ENCODE measurements at regions of chr13 and their contacts with region 1.

Region 1: GRCh38 chr13:43804461-43805070 is 17.8 kb upstream of the ENOX1 start:
- DNase-seq: peak; percentile 44
- H3K4me3 ChIP-seq: peak overlapping the region; percentile 43
- H3K27ac ChIP-seq: peak overlapping the region; percentile 83
- H3K27me3 ChIP-seq: no peaks in the 10 kb centered on the region
- CTCF ChIP-seq: peak; percentile 52

Region 2: GRCh38 chr13:43085545-43085944 is 719.0 kb before region 1 on chr13:
- CTCF ChIA-PET with region 1: interaction called, 62 read pairs
- POLR2A ChIA-PET with region 1: no interaction called
- DNase-seq: no peak
- H3K4me3 ChIP-seq: no peak overlapping the region
- H3K27ac ChIP-seq: no peak overlapping the region
- H3K27me3 ChIP-seq: no peaks in the 10 kb centered on the region
- CTCF ChIP-seq: peak; percentile 59

Region 3: DNA sequence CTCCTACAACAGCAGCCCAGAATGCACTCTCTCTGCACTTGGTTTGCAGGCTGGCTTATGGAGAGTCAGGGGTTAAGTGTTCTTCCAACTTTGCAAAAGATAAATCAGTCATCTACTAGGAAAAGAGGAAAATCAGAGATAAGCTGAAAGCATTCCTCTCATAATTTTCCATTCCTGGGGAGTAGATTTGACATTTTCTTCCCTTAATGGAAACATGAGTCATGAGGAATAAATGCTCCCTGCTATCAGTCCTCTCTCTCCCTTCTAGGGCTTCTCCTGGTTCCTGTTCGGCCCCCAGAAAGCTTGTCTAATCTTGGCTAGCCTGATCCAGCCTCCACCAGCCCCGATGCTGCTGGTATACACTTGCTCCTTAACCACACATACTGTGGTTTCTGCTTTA is 10.6 kb after region 1 on chr13:
- CTCF ChIA-PET with region 1: interaction called, 17 read pairs
- POLR2A ChIA-PET with region 1: interaction called, 5 read pairs
- DNase-seq: peak; percentile 30
- H3K4me3 ChIP-seq: no peak overlapping the region
- H3K27ac ChIP-seq: peak overlapping the region; percentile 82
- H3K27me3 ChIP-seq: no peaks in the 10 kb centered on the region
- CTCF ChIP-seq: no peak